Aorta (tissue), 5 donors: ENCODE measurements at regions of chr2 and their contacts with region 1.

Region 1: DNA sequence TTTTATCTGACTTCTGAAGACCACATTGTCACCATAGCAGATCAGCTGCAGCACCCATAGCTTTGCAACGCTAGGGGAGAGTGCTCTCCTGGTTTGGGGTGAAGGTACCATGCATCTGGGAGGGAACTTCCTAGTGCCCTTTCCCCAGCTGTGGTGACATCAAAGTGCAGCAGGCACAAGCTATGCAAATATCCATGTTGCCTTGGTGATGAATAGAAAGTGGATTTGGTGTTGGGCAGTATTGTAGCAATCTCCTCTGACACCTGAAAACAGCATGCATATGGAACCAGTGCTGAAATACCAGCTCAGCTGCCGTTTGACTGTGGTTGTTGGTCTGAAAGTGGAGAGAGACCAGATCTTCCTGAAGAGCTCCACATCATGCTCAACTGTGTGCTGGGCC is 37.1 kb downstream of the BCL2L11 start:
- DNase-seq: no peak
- ATAC-seq: no peak
- H3K4me3 ChIP-seq: no peak overlapping the region
- H3K27ac ChIP-seq: no peak overlapping the region
- H3K4me1 ChIP-seq: peaks cover 0 to 5% of the 10 kb centered on the region in 2 donors
- H3K27me3 ChIP-seq: no peaks in the 10 kb centered on the region

Region 2: DNA sequence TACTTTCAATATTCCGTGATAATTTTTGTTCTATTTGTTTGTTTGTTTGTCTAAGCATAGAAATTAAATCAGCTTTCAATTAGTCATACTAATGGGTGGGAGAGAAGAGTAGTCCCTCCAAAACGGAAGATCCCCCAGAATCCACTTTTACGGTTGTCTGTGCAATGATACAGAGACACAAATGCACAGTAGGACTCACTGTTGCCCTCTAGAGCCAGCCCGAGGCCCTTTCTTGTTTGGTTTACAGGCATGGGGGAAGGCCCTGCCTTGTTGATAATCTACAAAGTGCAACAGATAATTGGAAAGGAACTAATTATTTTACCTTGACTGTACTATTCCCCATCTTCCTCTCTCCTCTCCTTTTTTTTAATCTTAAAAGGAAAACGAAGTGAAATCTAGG is 304.3 kb before region 1 on chr2:
- intact Hi-C with region 1: no loop called
- DNase-seq: no peak
- ATAC-seq: no peak
- H3K4me3 ChIP-seq: no peak overlapping the region
- H3K27ac ChIP-seq: no peak overlapping the region
- H3K4me1 ChIP-seq: no peaks in the 10 kb centered on the region
- H3K27me3 ChIP-seq: no peaks in the 10 kb centered on the region

Region 3: GRCh38 chr2:111128096-111128495 is 29.7 kb before region 1 on chr2:
- intact Hi-C with region 1: loop called in 1 of 2 experiments (anchors 2 kb)
- DNase-seq: no peak
- ATAC-seq: no peak
- H3K4me3 ChIP-seq: no peak overlapping the region
- H3K27ac ChIP-seq: no peak overlapping the region
- H3K4me1 ChIP-seq: no peaks in the 10 kb centered on the region
- H3K27me3 ChIP-seq: no peaks in the 10 kb centered on the region